Activated B cell treated with CpG ODN at 0.5 μM for 24 hours (primary cell): ENCODE measurements at regions of chr20 and their contacts with region 1.

Region 1: GRCh38 chr20:38842558-38842981 is 37.1 kb downstream of the PPP1R16B start:
- DNase-seq: peak; percentile 51
- ATAC-seq: peak; percentile 97
- H3K4me3 Mint-ChIP-seq: peak overlapping the region; percentile 75
- H3K27ac Mint-ChIP-seq: peak overlapping the region; percentile 97
- H3K4me1 Mint-ChIP-seq: peaks cover 93% of the 10 kb centered on the region
- H3K27me3 Mint-ChIP-seq: no peaks in the 10 kb centered on the region
- CTCF ChIP-seq: no peak

Region 2: DNA sequence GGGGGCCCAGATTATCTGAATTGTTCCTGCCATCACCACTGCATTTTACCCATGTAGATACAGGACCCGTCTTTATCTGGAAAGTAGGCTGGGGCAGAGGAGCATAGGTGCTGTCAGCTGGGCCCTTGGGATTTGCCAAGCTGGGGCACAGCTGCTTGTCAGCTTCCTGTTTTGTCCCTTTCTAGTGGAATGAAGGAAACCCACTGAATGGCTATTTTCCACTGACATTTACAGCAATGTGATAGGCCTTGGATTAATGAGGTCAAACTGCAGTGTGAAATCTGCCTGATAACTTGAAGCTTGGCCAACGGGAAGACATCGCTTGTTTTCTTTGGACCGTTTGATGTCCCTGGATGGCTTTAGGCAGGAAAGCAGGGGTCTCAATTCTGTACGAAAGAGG is 30.4 kb before region 1 on chr20:
- CTCF ChIA-PET with region 1: interaction called, 6 read pairs
- POLR2A ChIA-PET with region 1: interaction called, 140 read pairs
- intact Hi-C with region 1: no loop called
- DNase-seq: no peak
- ATAC-seq: peak; percentile 42
- H3K4me3 Mint-ChIP-seq: peak overlapping the region; percentile 49
- H3K27ac Mint-ChIP-seq: peak overlapping the region; percentile 79
- H3K4me1 Mint-ChIP-seq: peaks cover 98% of the 10 kb centered on the region
- H3K27me3 Mint-ChIP-seq: no peaks in the 10 kb centered on the region
- CTCF ChIP-seq: no peak

Region 3: DNA sequence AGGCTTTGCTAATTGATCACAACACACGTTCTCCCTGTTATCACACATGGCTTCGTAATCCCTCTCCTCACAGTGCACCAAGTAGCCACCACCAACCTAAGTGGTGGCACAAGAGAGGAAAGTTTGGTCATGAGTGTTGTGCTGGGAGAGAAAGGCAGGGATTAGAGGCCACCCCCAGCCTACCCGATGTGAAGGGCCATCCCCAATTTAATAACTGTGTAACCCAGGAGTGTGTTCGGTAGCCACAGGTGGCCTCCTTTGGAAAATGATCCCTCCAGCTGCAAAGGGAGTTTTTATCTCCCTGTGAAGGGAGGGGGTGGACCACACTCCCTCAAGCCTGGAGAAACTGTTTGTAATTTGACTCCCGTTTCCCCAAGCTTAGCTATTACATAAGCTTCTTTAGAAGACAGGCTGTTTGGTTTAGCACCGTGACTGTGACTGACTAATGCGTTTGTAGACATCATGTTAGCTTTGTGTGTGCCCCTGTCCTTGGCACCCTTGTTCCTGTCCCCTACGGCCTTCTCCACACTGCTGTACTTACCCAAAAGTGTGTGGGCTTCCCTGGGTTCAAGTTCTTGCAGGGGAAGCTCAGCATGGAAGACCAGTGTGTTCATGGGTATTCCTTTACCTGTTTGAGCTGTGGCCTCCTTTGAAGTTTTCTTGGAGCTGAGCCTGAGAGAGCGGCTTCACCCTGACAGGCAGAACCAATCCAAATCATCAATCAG is 16.5 kb before region 1 on chr20:
- CTCF ChIA-PET with region 1: no interaction called
- POLR2A ChIA-PET with region 1: interaction called, 4 read pairs
- intact Hi-C with region 1: loop called (anchors 2 kb)
- DNase-seq: no peak
- ATAC-seq: no peak
- H3K4me3 Mint-ChIP-seq: no peak overlapping the region
- H3K27ac Mint-ChIP-seq: peak overlapping the region; percentile 61
- H3K4me1 Mint-ChIP-seq: peaks cover 89% of the 10 kb centered on the region
- H3K27me3 Mint-ChIP-seq: no peaks in the 10 kb centered on the region
- CTCF ChIP-seq: no peak

Region 4: GRCh38 chr20:38863024-38863851 is 20.7 kb after region 1 on chr20:
- CTCF ChIA-PET with region 1: interaction called, 7 read pairs
- POLR2A ChIA-PET with region 1: interaction called, 111 read pairs
- intact Hi-C with region 1: loop called (anchors 1 kb)
- DNase-seq: peak; percentile 52
- ATAC-seq: peak; percentile 78
- H3K4me3 Mint-ChIP-seq: peak overlapping the region; percentile 76
- H3K27ac Mint-ChIP-seq: peak overlapping the region; percentile 95
- H3K4me1 Mint-ChIP-seq: peaks cover 94% of the 10 kb centered on the region
- H3K27me3 Mint-ChIP-seq: no peaks in the 10 kb centered on the region
- CTCF ChIP-seq: no peak

Region 5: GRCh38 chr20:38875175-38875993 is 32.8 kb after region 1 on chr20:
- CTCF ChIA-PET with region 1: interaction called, 8 read pairs
- POLR2A ChIA-PET with region 1: interaction called, 114 read pairs
- intact Hi-C with region 1: loop called (anchors 1 kb)
- DNase-seq: peak; percentile 60
- ATAC-seq: peak; percentile 63
- H3K4me3 Mint-ChIP-seq: peak overlapping the region; percentile 83
- H3K27ac Mint-ChIP-seq: peak overlapping the region; percentile 97
- H3K4me1 Mint-ChIP-seq: peaks cover 98% of the 10 kb centered on the region
- H3K27me3 Mint-ChIP-seq: no peaks in the 10 kb centered on the region
- CTCF ChIP-seq: no peak